ENCODE measurements at regions of chr1 and their contacts with region 1.

Region 1: DNA sequence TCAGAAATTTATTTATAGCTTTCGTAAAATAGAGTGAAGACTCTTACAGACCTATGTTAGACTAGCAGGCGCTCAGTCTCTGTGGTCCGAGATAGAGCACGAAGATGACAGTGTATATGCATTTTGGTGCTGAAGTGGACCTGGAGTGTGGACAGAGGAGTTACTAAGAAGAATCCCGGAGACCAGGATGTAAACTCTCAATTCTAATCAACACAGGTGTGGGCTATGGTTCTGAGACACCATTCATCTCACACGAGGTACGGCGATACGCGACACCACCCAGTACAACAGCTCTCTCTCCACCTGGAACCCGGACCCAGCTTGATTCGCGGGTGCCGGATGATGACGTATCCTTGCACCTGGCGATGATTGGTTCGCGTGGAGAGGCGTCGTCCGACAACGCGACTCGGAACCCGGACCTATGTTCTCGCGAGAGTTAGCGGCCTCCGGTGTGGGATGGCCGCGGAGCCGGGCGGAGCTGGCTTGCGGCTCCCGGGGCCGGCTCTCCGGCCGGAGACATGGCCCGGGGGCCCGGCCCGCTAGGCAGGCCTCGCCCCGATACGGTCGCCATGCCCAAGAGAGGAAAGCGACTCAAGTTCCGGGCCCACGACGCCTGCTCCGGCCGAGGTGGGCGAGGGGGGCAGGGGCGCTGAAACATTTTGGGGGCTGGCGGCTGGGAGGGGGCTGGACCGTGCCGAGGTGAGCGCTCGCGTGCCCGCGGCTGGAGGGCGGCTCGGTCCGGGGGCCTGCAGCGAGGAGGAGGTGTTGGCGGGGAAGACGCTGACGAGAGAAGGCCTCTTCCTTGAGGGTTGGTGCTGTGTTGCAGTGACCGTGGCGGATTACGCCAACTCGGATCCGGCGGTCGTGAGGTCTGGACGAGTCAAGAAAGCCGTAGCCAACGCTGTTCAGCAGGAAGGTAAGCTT is at the start of gene TMEM183A:
- DNase-seq: peak; percentile 90 to 98
- ATAC-seq: peak; percentile 98 to 99
- H3K4me3 ChIP-seq: peak within 1 kb of the TSS; percentile 95
- H3K27ac ChIP-seq: peak within 1 kb of the TSS; percentile 96 to 100
- H3K4me1 ChIP-seq: peaks cover 13% of the 10 kb centered on the region
- CTCF ChIP-seq: no peak
- EP300 ChIP-seq: no peak
- POLR2A ChIP-seq: peak; percentile 91
- RAD21 ChIP-seq: no peak
- polyA plus RNA-seq, gene TMEM183A: 114 and 123 TPM in 2 replicates

Region 2: GRCh38 chr1:202926720-202927491 is 80.3 kb before region 1 on chr1 and contains the start of gene KLHL12:
- CTCF ChIA-PET with region 1: interaction called, 3 read pairs
- POLR2A ChIA-PET with region 1: interaction called, 15 read pairs
- DNase-seq: peak; percentile 94 to 98
- ATAC-seq: peak; percentile 99
- H3K4me3 ChIP-seq: peak within 1 kb of the TSS; percentile 51
- H3K27ac ChIP-seq: peak within 1 kb of the TSS; percentile 87 to 95
- H3K4me1 ChIP-seq: peaks cover 6% of the 10 kb centered on the region; the same call in 2 of the 3 replicates
- CTCF ChIP-seq: peak; percentile 68
- EP300 ChIP-seq: no peak
- POLR2A ChIP-seq: peak; percentile 91
- RAD21 ChIP-seq: peak; percentile 41 to 51; a peak in 4 of 5 replicates
- polyA plus RNA-seq, gene KLHL12: 59.4 and 60.3 TPM in 2 replicates

Region 3: DNA sequence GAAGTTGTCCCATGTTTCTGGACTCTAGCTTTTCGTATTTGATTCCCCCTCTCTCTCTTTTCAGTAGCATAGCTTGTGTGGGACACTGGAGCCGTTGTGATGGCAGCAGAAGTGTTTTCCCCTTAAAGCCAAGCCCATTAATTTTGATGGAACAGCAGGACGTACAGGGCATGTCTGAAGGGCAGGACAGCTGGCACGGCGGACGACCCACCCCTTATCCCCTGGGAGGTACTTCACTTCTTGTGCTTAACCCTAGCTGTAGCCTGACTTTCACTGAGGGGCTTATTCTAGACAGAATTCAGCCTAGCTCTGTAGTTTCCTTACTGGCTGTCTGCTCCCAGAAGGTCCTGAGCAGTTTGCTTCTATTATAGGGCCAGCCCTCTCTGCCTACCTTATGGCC is 10.5 kb after region 1 on chr1:
- CTCF ChIA-PET with region 1: interaction called, 7 read pairs
- POLR2A ChIA-PET with region 1: interaction called, 13 read pairs
- DNase-seq: no peak
- ATAC-seq: no peak
- H3K4me3 ChIP-seq: no peak overlapping the region
- H3K27ac ChIP-seq: no peak overlapping the region
- H3K4me1 ChIP-seq: no peaks in the 10 kb centered on the region
- CTCF ChIP-seq: no peak
- EP300 ChIP-seq: no peak
- POLR2A ChIP-seq: no peak
- RAD21 ChIP-seq: no peak

Region 4: GRCh38 chr1:203026031-203026989 is 19.1 kb after region 1 on chr1 and contains the start of gene PPFIA4:
- CTCF ChIA-PET with region 1: interaction called, 7 read pairs
- POLR2A ChIA-PET with region 1: interaction called, 13 read pairs
- DNase-seq: peak; percentile 72 to 87
- ATAC-seq: peak; percentile 68 to 90
- H3K4me3 ChIP-seq: peak within 1 kb of the TSS; percentile 58
- H3K27ac ChIP-seq: peak within 1 kb of the TSS; percentile 59 to 84; a peak in 5 of 6 replicates
- H3K4me1 ChIP-seq: no peaks in the 10 kb centered on the region
- CTCF ChIP-seq: no peak
- EP300 ChIP-seq: no peak
- POLR2A ChIP-seq: peak; percentile 37
- RAD21 ChIP-seq: peak; percentile 12 to 24; a peak in 2 of 5 replicates
- polyA plus RNA-seq, gene PPFIA4: 0.47 and 1.0 TPM in 2 replicates